Colonic mucosa (tissue), 4 donors: ENCODE measurements at regions of chr2 and their contacts with region 1.

Region 1: GRCh38 chr2:54599914-54600313 is 123.5 kb upstream of the EML6 start:
- DNase-seq: peak; percentile 76
- H3K4me3 ChIP-seq: no peak overlapping the region
- H3K27ac ChIP-seq: peak overlapping the region; percentile 4
- H3K4me1 ChIP-seq: peaks cover 48% of the 10 kb centered on the region
- H3K27me3 ChIP-seq: no peaks in the 10 kb centered on the region
- CTCF ChIP-seq: no peak

Region 2: GRCh38 chr2:54279385-54279784 is 320.5 kb before region 1 on chr2:
- intact Hi-C with region 1: no loop called
- DNase-seq: no peak
- H3K4me3 ChIP-seq: no peak overlapping the region
- H3K27ac ChIP-seq: no peak overlapping the region
- H3K4me1 ChIP-seq: no peaks in the 10 kb centered on the region
- H3K27me3 ChIP-seq: no peaks in the 10 kb centered on the region
- CTCF ChIP-seq: no peak

Region 3: DNA sequence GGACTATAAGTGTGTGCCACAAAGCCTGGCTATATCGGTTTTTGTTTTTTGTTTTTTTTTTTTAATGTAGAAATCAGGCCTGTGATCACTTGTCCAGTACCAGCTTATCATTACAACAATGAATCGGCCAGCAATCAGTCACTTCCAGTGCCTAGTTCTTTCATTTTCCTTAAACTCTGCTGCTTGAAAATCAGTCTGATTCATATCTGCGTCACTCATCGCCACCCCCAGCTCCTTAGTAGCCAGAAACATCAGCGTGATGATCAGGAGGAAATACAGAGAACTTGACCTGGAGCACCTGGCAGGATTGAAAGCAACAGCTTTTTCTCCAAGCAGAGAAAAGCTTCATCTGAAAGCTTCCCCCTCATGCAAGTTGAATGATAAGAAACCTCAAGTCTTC is 68.4 kb before region 1 on chr2:
- intact Hi-C with region 1: loop called (anchors 10 kb)
- DNase-seq: no peak
- H3K4me3 ChIP-seq: no peak overlapping the region
- H3K27ac ChIP-seq: peak overlapping the region; percentile 24
- H3K4me1 ChIP-seq: peaks cover 13% of the 10 kb centered on the region
- H3K27me3 ChIP-seq: no peaks in the 10 kb centered on the region
- CTCF ChIP-seq: no peak